ENCODE measurements at regions of chr13 and their contacts with region 1.

Region 1: DNA sequence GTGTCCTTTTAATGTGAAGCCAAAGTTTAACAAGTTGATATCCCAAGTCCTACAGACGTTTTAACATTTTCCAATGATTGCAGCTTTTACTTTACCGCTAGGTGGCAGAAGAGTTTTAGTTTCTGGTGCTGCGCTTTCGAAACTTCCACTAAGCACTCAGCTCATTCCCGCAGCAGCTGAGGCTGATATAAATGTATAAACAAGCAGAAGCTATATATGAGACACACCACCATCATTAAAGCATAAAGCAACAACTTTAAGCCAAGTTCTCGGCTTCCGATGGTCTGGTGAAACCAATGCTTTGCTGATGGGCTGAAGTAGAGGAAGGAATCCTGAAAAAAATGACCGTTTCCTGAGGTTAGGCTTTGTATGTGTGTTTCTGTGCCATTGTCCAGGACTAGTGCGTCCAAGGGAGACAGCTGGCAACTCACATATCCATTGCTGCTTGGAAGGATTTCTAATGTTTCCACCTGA is 753.9 kb downstream of the OLFM4 start:
- DNase-seq: peak; percentile 21
- ATAC-seq: peak; percentile 23
- H3K4me3 Mint-ChIP-seq: no peak overlapping the region
- H3K27ac Mint-ChIP-seq: no peak overlapping the region
- H3K4me1 Mint-ChIP-seq: peaks cover 4% of the 10 kb centered on the region
- H3K27me3 Mint-ChIP-seq: no peaks in the 10 kb centered on the region

Region 2: DNA sequence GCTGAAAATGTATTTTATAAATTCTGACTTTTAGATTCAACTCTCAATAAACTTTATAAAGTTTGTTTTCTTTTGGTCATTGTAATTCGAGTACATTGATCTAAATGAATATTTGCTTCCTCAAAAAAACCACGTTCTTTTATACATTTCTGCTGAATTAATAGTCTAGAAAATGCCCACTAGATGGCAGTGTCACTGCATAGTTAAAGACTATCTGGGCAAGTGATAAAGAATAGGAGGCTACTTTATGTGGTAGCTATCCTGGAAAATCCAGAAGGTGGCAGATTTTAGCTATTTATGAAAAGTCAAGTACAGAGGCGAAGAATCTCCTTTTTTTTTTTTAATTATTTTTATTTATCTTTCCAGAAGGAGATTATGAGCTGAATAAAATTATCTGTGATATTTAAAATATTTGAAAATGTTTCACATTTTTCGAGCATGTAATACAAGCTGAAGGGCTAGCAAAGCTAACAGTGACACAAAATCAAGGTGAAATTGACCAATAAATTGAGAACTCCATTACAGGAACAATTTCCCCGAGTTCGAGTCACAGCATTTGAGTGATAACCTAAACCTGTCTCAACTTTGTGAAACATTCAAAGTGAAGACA is 532.2 kb before region 1 on chr13:
- CTCF ChIA-PET with region 1: interaction called, 5 read pairs
- POLR2A ChIA-PET with region 1: no interaction called
- intact Hi-C with region 1: loop called (anchors 1 to 10 kb)
- DNase-seq: peak; percentile 13
- ATAC-seq: no peak
- H3K4me3 Mint-ChIP-seq: no peak overlapping the region
- H3K27ac Mint-ChIP-seq: no peak overlapping the region
- H3K4me1 Mint-ChIP-seq: no peaks in the 10 kb centered on the region
- H3K27me3 Mint-ChIP-seq: no peaks in the 10 kb centered on the region

Region 3: DNA sequence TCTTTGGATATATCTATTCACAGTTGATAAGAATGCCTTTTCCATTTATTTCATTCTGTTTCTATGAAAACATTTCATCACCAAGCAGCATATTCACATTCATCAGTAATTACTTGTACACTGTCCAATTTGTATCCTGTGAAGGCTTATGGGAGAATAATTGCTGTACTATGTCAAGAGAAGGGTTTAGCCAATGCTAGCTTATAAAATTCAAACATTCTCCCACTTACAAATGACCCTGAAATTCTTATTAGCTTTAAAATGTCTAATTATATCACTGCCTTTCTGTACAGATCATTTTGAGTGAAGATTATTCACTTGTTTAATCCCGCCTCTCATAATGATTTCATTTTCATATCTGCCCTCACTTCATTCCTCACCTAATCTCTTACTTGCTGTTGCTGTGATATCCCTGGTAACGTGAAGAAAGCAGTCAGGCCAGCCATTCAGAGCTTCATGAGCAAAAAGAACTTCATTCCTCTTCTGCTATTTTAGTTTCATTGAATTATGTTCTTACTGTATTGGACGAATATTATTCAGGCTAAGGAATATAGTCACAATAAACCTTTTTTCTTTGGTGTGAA is 24.8 kb after region 1 on chr13:
- CTCF ChIA-PET with region 1: no interaction called
- POLR2A ChIA-PET with region 1: no interaction called
- intact Hi-C with region 1: no loop called
- DNase-seq: no peak
- ATAC-seq: no peak
- H3K4me3 Mint-ChIP-seq: no peak overlapping the region
- H3K27ac Mint-ChIP-seq: no peak overlapping the region
- H3K4me1 Mint-ChIP-seq: no peaks in the 10 kb centered on the region
- H3K27me3 Mint-ChIP-seq: no peaks in the 10 kb centered on the region

Region 4: GRCh38 chr13:55000043-55000442 is 1217.5 kb after region 1 on chr13:
- CTCF ChIA-PET with region 1: no interaction called
- POLR2A ChIA-PET with region 1: no interaction called
- intact Hi-C with region 1: no loop called
- DNase-seq: no peak
- ATAC-seq: no peak
- H3K4me3 Mint-ChIP-seq: no peak overlapping the region
- H3K27ac Mint-ChIP-seq: no peak overlapping the region
- H3K4me1 Mint-ChIP-seq: no peaks in the 10 kb centered on the region
- H3K27me3 Mint-ChIP-seq: no peaks in the 10 kb centered on the region